Endothelial cell of umbilical vein (primary cell): ENCODE measurements at regions of chr13 and their contacts with region 1.

Region 1: GRCh38 chr13:75102001-75102716 is 379.8 kb downstream of the TBC1D4 start:
- DNase-seq: peak; percentile 6
- H3K4me3 ChIP-seq: no peak overlapping the region
- H3K27ac ChIP-seq: no peak overlapping the region
- H3K4me1 ChIP-seq: no peaks in the 10 kb centered on the region
- H3K27me3 ChIP-seq: no peaks in the 10 kb centered on the region
- CTCF ChIP-seq: no peak
- POLR2A ChIP-seq: no peak

Region 2: GRCh38 chr13:74770361-74770760 is 331.8 kb before region 1 on chr13:
- CTCF ChIA-PET with region 1: no interaction called
- POLR2A ChIA-PET with region 1: no interaction called
- dilution Hi-C with region 1: no loop called
- intact Hi-C with region 1: loop called (anchors 10 kb)
- DNase-seq: no peak
- H3K4me3 ChIP-seq: no peak overlapping the region
- H3K27ac ChIP-seq: no peak overlapping the region
- H3K4me1 ChIP-seq: no peaks in the 10 kb centered on the region
- H3K27me3 ChIP-seq: no peaks in the 10 kb centered on the region
- CTCF ChIP-seq: no peak
- POLR2A ChIP-seq: no peak

Region 3: DNA sequence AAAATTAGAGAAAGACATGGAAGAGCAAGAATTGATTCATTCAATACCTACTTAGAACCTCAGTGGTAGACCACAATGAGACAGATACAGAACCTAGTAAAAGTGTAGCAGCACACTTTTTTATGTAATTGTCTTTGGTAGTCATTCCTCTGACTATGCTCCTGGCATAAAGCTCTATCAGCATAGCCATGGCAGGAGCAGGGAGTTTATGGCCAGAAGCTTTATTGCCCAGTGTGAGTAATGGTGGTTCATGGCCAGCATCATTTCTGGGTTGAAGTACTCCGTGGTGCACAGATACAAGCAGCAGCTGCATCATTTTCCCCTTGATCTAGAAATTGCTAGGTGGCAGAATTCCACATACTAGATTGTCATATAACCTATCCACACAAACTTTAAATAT is 27.2 kb after region 1 on chr13:
- CTCF ChIA-PET with region 1: no interaction called
- POLR2A ChIA-PET with region 1: no interaction called
- dilution Hi-C with region 1: no loop called
- intact Hi-C with region 1: no loop called
- DNase-seq: no peak
- H3K4me3 ChIP-seq: no peak overlapping the region
- H3K27ac ChIP-seq: no peak overlapping the region
- H3K4me1 ChIP-seq: no peaks in the 10 kb centered on the region
- H3K27me3 ChIP-seq: no peaks in the 10 kb centered on the region
- CTCF ChIP-seq: no peak
- POLR2A ChIP-seq: no peak